IMR-90 (cell line): ENCODE measurements at regions of chr12 and their contacts with region 1.

Region 1: GRCh38 chr12:64544371-64545080 is 65.8 kb upstream of the RASSF3 start:
- DNase-seq: no peak
- ATAC-seq: no peak
- H3K4me3 ChIP-seq: no peak overlapping the region
- H3K27ac ChIP-seq: no peak overlapping the region
- H3K4me1 ChIP-seq: peaks cover 5% of the 10 kb centered on the region
- H3K27me3 ChIP-seq: no peaks in the 10 kb centered on the region
- CTCF ChIP-seq: no peak
- POLR2A ChIP-seq: no peak
- RAD21 ChIP-seq: no peak

Region 2: GRCh38 chr12:64459394-64459891 is 85.1 kb before region 1 on chr12:
- CTCF ChIA-PET with region 1: no interaction called
- POLR2A ChIA-PET with region 1: no interaction called
- dilution Hi-C with region 1: no loop called
- in situ Hi-C with region 1: no loop called
- intact Hi-C with region 1: loop called (anchors 5 kb)
- DNase-seq: no peak
- ATAC-seq: no peak
- H3K4me3 ChIP-seq: no peak overlapping the region
- H3K27ac ChIP-seq: peak overlapping the region; percentile 41; the same call in 1 of the 2 replicates
- H3K4me1 ChIP-seq: peaks cover 23% of the 10 kb centered on the region
- H3K27me3 ChIP-seq: no peaks in the 10 kb centered on the region
- CTCF ChIP-seq: no peak
- POLR2A ChIP-seq: no peak
- RAD21 ChIP-seq: no peak

Region 3: DNA sequence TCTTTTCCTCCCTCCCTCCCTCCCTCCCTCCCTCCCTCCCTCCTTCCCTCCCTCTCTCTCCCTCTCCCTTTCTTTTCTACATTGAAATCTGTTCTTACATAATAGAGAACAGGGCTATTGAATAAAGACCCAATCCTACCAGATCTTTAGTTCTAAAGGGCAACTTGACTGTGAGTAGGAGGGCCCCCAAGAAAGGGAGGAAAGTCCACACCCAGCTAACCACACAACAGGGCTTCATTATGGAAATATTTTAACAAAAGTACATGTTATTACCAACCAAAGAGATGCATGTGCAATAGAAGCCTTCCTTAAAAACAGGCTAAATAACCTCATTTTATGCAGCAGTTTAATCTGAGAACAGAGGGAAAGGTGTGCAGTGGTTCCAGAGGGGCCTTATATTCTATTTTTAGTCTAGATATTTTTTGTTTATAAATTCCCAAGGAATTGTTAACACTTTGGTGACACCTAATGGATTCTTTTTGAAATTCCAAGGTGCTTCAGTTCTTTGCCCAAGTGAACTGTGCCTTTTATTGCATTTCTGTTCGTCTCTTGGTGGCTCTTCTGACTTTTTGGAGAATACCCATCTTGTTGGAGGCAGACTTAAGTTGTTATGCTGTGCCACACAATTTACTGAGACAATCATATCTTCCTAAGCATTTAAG is 151.7 kb after region 1 on chr12:
- CTCF ChIA-PET with region 1: interaction called, 27 read pairs
- POLR2A ChIA-PET with region 1: no interaction called
- dilution Hi-C with region 1: no loop called
- in situ Hi-C with region 1: loop called (anchors 5 kb)
- intact Hi-C with region 1: loop called (anchors 1 kb)
- DNase-seq: peak; percentile 43
- ATAC-seq: peak; percentile 15; the same call in 1 of the 2 replicates
- H3K4me3 ChIP-seq: no peak overlapping the region
- H3K27ac ChIP-seq: no peak overlapping the region
- H3K4me1 ChIP-seq: peaks cover 3% of the 10 kb centered on the region
- H3K27me3 ChIP-seq: no peaks in the 10 kb centered on the region
- CTCF ChIP-seq: peak; percentile 54
- POLR2A ChIP-seq: no peak
- RAD21 ChIP-seq: peak; percentile 63

Region 4: DNA sequence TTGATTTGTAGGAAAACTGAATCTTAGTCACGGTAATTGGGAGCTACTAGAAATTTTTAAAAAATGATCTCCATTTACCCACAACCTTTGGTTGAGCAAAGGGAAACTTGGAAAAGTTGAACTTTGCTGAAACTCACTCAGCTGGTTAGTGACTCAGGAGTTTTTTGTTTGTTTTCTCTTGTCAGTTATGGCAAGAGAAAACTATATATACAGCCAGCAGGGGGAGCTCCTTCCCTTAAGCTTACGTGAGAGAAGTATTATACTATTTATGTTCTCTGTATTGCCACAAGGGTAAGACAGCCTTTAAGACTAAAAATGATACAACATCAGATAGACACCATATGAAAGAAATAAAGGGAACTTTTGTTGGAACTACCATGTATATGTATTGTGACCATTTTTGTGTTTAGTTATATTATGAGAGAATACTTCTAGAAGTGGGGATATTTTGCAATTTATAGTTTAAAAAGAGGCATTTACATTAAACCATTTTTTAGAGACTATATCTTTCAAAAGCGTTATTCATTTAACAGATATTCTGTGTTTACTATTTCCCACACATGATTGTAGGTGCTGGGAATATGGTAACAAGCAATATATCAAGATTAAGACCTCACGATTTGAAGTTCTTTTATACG is 251.8 kb after region 1 on chr12:
- CTCF ChIA-PET with region 1: interaction called, 3 read pairs
- POLR2A ChIA-PET with region 1: no interaction called
- dilution Hi-C with region 1: no loop called
- in situ Hi-C with region 1: no loop called
- intact Hi-C with region 1: loop called (anchors 5 kb)
- DNase-seq: peak; percentile 92
- ATAC-seq: peak; percentile 96
- H3K4me3 ChIP-seq: no peak overlapping the region
- H3K27ac ChIP-seq: no peak overlapping the region
- H3K4me1 ChIP-seq: no peaks in the 10 kb centered on the region
- H3K27me3 ChIP-seq: peaks cover 32% of the 10 kb centered on the region
- CTCF ChIP-seq: peak; percentile 88
- POLR2A ChIP-seq: no peak
- RAD21 ChIP-seq: peak; percentile 52